GM10248 (cell line): ENCODE measurements at regions of chr1 and their contacts with region 1.

Region 1: DNA sequence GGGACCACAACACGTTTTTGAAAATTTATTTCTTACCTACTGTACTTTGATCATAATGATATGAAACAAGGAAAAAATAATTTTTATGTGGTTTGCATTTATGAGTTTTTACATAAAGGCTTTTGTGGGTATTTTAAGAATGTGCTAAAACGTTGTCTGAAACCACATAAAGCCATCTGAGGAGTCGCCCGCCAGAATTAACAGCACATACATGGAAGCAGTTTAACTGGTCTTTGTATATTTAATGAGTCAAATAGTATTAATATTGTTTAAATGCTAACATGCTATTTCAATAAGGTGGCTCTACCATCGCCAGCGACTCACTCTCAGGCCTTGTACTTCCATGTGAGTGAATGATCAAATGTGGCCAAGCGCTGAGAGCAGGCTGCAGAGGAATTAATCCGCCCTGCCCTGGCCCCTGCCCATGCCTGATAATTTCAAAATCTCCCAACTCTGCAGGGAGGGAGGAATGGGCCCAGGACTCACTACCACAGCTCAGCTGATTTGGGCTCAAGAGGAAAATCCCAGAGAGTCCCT is 49.6 kb downstream of the SLC66A1 start:
- DNase-seq: no peak
- CTCF ChIP-seq: no peak

Region 2: DNA sequence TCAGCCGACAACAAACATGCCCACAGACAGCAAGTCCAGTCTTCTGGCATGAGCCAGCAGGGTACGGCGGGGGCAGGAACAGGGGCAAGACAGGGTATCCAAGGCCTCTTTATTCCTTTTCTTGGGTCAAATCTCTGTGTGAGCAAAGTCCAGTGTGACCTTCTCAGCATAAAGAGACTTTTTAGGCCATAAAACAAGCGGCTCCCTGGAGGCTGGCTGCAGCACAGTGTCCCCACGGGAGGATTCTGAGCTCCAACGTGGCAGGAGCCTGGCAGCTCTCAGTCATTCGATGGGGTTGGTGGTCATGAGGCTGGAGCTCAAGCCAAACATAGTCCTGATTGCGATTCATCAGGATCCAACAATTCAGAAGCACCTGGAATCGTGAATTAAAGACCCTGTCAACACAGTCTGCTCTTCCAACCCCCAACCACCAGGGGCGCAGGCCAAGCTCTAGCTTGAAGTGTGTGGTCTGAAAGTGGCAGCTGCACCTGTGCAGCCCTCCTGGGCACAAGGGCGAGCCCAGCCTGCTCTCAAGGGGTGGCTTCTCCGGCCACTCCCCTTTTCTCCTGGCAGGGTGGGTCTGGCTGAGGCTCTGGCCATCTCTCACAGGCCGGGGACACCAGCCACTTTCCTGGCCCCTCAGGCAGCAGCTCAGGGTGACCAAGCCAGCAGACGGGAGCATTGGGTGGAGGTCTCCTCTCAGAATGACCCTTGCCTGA is 12.6 kb after region 1 on chr1:
- CTCF ChIA-PET with region 1: interaction called, 14 read pairs
- POLR2A ChIA-PET with region 1: no interaction called
- DNase-seq: peak; percentile 53
- CTCF ChIP-seq: peak; percentile 31

Region 3: DNA sequence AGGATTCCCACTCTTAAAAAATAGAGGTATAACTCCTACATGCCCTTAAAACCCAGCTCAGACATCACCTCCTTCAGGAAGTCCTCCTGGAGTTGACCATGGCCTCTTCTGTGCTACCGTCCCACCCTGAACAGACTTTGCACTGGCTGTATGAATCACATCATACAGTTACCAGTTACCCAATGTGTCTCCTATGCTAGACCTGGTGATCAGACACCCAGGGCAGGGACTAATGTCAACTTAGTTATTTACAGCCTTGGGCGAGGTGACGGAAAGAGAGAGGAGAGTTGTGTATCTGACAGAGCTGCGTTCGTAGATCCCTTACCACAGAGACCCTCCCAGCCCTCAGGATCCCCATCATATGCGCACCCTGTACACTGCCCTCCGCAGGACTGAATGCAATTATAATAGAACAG is 23.1 kb after region 1 on chr1:
- CTCF ChIA-PET with region 1: no interaction called
- POLR2A ChIA-PET with region 1: no interaction called
- DNase-seq: no peak
- CTCF ChIP-seq: no peak